A549 (cell line): ENCODE measurements at regions of chr2 and their contacts with region 1.

Region 1: GRCh38 chr2:20781656-20782265 is 41.1 kb downstream of the LDAH start:
- DNase-seq: peak; percentile 21
- ATAC-seq: peak; percentile 64 to 84; a peak in 4 of 6 replicates
- H3K4me3 ChIP-seq: no peak overlapping the region
- H3K27ac ChIP-seq: no peak overlapping the region
- H3K4me1 ChIP-seq: no peaks in the 10 kb centered on the region
- CTCF ChIP-seq: peak; percentile 79
- EP300 ChIP-seq: no peak
- POLR2A ChIP-seq: no peak
- RAD21 ChIP-seq: peak; percentile 63 to 73

Region 2: GRCh38 chr2:20771299-20771698 is 10.5 kb before region 1 on chr2:
- CTCF ChIA-PET with region 1: interaction called, 20 read pairs
- POLR2A ChIA-PET with region 1: no interaction called
- DNase-seq: no peak
- ATAC-seq: no peak
- H3K4me3 ChIP-seq: no peak overlapping the region
- H3K27ac ChIP-seq: no peak overlapping the region
- H3K4me1 ChIP-seq: peaks cover 5% of the 10 kb centered on the region; the same call in 1 of the 3 replicates
- CTCF ChIP-seq: no peak
- EP300 ChIP-seq: no peak
- POLR2A ChIP-seq: no peak
- RAD21 ChIP-seq: no peak

Region 3: DNA sequence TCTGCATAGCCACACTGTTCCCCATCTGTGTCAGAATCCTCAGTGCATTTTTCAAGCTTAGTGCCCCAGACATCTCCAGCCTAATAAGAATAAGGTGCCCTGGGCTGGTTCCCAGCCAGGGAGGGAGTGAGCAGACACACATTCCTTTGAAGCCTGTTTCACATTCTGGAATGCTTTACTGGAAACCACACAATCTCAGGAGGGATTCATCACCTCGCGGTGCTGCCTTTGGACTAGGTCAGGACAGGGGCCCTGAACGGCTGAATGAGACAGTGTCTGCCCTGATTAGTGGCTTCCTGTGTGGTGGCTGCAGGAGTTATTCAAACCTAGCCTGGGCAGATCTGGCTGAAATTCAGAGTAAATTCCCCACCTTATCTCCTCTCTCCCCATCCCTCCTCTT is 149.2 kb after region 1 on chr2:
- CTCF ChIA-PET with region 1: no interaction called
- POLR2A ChIA-PET with region 1: no interaction called
- DNase-seq: no peak
- ATAC-seq: no peak
- H3K4me3 ChIP-seq: no peak overlapping the region
- H3K27ac ChIP-seq: no peak overlapping the region
- H3K4me1 ChIP-seq: no peaks in the 10 kb centered on the region
- CTCF ChIP-seq: no peak
- EP300 ChIP-seq: no peak
- POLR2A ChIP-seq: no peak
- RAD21 ChIP-seq: no peak